Motor neuron (in vitro differentiated cells): ENCODE measurements at regions of chr13 and their contacts with region 1.

Region 1: DNA sequence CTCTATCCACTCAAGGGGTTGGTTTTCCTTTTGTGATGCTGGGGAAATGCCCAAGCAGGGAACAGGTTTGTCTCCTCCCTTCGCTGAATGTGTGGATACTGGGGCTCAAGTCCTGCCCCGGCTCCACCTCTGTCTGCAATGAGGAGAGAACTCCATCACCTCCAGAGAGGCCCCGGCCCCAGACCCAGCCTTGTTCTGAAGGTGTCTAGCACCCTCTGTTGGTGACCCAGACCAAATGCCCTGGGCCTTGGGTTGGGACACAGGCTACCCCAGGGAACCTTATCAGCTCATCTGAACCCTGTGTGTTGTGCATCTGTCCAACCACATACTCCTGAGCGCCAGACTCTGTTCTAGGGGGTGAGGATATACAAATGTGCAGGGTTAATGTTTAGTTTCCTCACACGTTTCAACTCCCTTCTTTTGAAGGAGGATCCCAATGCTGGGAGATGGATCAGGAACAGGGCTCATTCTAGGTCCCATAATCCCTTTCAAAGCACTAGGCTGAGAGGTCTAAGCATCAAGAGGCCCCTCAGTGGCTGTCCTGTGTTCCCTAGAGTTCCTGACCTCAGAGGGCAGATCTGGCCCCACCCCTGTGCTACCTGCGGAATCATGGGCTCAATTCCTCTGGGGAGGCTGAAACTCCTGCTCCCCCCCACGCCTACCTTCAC is 112.5 kb upstream of the SLC7A1 start:
- ATAC-seq: peak in 3 of 8 experiments; percentile 67 to 98 (median 80)
- H3K4me3 ChIP-seq: no peak overlapping the region
- H3K27ac ChIP-seq: no peak overlapping the region
- H3K4me1 ChIP-seq: peaks cover 23 to 25% of the 10 kb centered on the region in 2 donors

Region 2: DNA sequence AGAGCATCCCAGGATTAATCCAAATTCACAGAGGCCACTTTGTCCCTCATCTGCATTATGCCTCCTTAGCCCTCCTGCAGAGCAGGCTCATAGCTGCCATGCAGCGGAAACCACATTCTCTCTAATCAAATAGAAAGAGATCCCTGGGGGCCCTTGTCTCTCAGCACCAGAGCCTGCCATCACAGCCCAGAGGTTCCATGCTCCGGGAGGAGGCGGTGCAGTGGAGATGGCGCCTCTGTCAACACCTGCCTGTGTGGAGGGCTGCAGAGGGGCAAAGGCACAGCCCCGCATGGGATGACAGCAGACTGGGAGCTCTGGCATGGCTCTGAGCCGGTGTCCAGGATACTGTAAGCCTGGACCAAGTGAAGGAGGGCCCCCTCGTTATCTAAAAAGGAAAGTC is 223.8 kb before region 1 on chr13:
- in situ Hi-C with region 1: no loop called
- ATAC-seq: peak in 5 of 8 experiments; percentile 51 to 93 (median 53)
- H3K4me3 ChIP-seq: no peak overlapping the region
- H3K27ac ChIP-seq: no peak overlapping the region
- H3K4me1 ChIP-seq: peaks cover 8 to 14% of the 10 kb centered on the region in 2 donors

Region 3: DNA sequence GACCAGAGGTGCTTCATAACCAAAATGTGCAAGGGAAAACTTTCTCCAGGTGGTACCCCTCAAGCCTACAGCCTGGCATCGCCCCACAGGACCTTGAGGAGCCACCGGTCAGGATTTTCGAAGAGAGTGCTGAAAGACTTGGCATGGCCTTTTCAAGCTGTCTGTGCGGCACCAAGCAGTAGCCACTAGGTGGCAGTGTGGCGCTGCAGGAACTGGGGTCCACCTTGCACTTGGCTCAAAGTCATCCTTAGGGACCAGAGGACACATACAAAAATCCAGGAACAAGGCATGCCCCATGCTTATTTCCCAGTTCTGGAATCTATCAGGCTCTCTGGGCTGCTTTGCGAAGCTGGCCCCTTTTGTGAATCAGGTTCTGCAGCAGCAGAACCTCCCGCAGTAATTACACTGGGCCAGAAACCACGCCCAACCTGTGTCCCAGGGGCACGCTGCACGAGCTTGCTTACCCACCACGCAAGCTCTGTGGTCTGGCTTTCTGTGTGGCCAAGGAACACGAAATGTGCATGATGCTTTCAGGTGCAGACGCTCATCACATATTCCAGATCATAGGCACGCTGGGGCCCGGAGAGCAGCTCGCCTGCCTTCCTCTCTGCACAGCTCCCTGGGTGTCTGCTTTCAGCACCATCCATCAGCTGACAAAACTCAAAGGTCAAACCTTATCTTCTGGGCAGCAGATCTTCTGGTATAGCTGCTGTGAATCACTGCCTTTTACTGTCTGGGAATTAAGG is 199.7 kb before region 1 on chr13:
- in situ Hi-C with region 1: loop called in 3 of 9 experiments (anchors 10 to 25 kb)
- ATAC-seq: peak; percentile 80 to 90 (median 86)
- H3K4me3 ChIP-seq: no peak overlapping the region
- H3K27ac ChIP-seq: peak overlapping the region in 1 of 2 donors; percentile 68
- H3K4me1 ChIP-seq: peaks cover 25 to 29% of the 10 kb centered on the region in 2 donors

Region 4: DNA sequence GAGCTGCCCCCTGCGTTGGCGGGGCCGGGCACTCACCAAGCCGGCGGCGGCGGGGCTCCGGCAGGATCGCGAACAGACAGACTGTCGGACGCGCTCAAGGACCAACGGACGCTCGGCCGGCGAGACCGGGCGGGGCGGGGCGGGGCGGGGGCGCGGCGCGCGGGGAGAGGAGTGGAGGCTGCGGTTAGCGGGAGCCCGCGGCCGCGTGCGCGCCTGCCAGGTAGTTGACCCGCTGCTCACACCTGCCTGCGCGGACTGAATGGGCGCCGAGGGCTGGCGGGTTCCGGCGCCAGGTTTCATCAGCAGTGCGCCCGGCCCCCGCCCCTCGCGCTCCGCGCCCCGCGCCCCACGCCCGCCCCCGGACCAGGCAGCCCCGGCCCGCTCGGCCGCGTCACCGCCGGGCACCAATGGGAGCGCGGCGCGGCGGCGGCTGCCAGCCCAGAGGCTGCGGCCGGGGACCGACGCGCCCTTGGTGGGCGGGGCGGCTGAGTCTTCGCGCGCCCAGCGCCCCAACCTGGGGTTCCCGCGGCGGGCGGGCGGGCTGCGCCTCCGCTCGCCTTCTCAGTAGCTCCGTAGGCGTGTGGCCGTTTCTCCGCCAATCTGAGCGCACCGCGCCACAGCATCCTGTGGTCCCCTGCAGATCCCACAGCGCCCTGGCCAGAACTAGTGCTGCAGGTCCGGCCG is 112.5 kb before region 1 on chr13 and contains the start of gene SLC7A1:
- in situ Hi-C with region 1: loop called in 1 of 9 experiments (anchors 25 kb)
- ATAC-seq: peak; percentile 77 to 91 (median 88)
- H3K4me3 ChIP-seq: peak within 1 kb of the TSS; percentile 90 to 97 (median 96)
- H3K27ac ChIP-seq: peak within 1 kb of the TSS; percentile 95 to 97
- H3K4me1 ChIP-seq: peaks cover 22 to 23% of the 10 kb centered on the region in 2 donors
- total RNA-seq, gene SLC7A1: 9.6 to 40.5 (median 23.5) TPM

Region 5: DNA sequence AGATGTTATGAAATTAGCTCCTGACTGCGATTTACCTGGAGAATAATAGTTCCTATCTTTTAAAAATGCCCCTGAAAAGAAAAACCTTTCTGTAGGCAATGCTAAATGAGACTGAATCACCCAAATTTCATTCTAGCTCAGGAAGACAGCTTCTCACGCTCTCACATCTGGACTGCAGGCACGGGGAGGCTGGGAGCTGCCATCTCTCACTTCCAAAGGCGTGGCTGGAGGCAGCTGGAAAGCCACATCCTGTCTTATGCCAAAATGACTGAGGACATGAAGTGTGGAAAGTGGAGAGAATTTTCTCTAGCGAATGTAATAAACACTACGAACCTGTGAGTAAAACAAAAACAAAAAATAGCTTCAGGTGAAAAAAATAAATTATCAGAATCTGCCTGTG is 200.4 kb after region 1 on chr13:
- in situ Hi-C with region 1: no loop called
- ATAC-seq: peak in 3 of 8 experiments; percentile 31 to 51 (median 33)
- H3K4me3 ChIP-seq: no peak overlapping the region
- H3K27ac ChIP-seq: no peak overlapping the region
- H3K4me1 ChIP-seq: peaks cover 22 to 33% of the 10 kb centered on the region in 2 donors